ENCODE measurements at regions of chr19 and their contacts with region 1.

Region 1: DNA sequence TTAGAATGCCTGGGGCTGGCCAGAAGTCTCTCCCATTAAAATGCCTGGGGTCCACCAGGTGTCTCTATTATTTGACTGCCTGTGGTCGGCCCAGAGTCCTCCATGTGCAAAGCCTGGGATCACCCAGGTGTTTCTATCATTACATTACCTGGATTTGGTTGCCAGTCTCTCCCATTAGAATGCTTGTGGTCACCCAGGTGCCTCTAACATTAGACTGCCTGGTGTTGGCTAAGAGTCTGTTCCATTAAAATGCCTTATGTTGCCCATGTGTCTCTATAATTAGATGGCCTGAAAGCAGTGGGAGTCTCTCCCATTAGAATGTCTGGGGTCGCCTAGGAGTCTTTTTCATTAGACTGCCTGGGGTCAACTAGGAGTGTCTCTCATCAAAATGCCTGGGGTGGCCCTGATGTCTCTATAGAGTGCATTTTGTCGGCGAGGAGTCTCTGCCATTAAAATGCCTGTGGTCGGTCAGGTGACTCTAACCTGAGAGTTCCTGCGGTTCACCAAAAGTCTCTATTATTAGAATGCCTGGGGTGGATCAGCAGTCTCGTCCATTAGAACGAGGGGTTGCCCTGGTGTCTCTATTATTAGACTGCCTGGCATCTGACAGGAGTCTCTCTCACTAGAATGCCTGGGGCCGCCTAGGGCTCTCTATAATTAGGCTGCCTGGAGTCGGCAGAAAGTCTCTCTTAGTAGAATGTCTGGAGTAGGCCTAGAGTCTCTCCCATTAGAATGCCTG is 1540.5 kb downstream of the UQCRFS1 start:
- DNase-seq: peak in 1 of 2 donors; percentile 51
- ATAC-seq: peak; percentile 84 to 88 (median 86)
- H3K4me3 ChIP-seq: no peak overlapping the region
- H3K27ac ChIP-seq: peak overlapping the region; percentile 5
- H3K4me1 ChIP-seq: peaks cover 40% of the 10 kb centered on the region
- H3K27me3 ChIP-seq: no peaks in the 10 kb centered on the region
- CTCF ChIP-seq: no peak

Region 2: DNA sequence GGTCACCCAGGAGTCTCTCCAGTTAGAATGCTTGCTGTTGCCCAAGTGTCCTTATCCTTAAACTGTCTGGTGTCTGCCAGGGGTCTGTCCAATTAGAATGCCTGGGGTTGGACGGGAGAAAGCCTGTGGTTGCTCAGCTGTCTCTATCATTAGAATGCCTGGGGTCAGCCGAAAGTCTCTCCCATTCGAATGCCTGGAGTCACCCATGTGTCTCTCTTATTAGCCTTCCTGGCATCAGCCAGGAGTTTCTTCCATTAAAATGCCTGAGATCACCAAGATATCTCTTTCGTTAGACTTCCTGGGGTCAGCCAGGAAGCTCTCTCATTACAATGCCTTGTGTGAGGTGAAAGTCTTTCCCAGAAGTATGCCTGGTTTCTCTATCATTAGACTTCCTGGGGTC is 19.5 kb after region 1 on chr19:
- intact Hi-C with region 1: no loop called
- DNase-seq: no peak
- ATAC-seq: no peak
- H3K4me3 ChIP-seq: no peak overlapping the region
- H3K27ac ChIP-seq: no peak overlapping the region
- H3K4me1 ChIP-seq: peaks cover 10% of the 10 kb centered on the region
- H3K27me3 ChIP-seq: no peaks in the 10 kb centered on the region
- CTCF ChIP-seq: no peak

Region 3: DNA sequence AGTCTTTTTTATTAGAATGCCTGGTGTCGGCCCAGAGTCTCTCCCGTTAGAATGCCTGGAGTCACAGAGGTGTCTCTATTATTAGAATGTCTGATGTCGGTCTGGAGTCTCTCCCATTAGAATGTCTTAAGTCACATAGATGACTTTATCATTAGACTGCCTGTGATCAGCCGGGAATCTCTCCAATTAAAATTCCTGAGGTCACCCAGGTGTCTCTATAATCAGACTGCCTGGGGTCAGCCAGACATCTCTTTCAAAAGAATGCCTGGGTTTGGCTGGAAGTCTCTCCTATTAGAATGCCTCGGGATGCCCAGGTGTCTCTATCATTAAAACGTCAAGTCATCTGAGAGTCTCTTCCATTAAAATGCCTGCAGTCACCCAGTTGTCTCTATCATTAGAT is 46.6 kb after region 1 on chr19:
- intact Hi-C with region 1: loop called in 1 of 2 experiments (anchors 1 kb)
- DNase-seq: no peak
- ATAC-seq: no peak
- H3K4me3 ChIP-seq: no peak overlapping the region
- H3K27ac ChIP-seq: no peak overlapping the region
- H3K4me1 ChIP-seq: no peaks in the 10 kb centered on the region
- H3K27me3 ChIP-seq: no peaks in the 10 kb centered on the region
- CTCF ChIP-seq: no peak

Region 4: GRCh38 chr19:27746691-27747380 is 74.4 kb after region 1 on chr19:
- intact Hi-C with region 1: loop called in 1 of 2 experiments (anchors 10 kb)
- DNase-seq: peak; percentile 19 to 57
- ATAC-seq: peak; percentile 54 to 73 (median 66)
- H3K4me3 ChIP-seq: peak overlapping the region; percentile 25
- H3K27ac ChIP-seq: no peak overlapping the region
- H3K4me1 ChIP-seq: peaks cover 30% of the 10 kb centered on the region
- H3K27me3 ChIP-seq: no peaks in the 10 kb centered on the region
- CTCF ChIP-seq: peak; percentile 43

Region 5: DNA sequence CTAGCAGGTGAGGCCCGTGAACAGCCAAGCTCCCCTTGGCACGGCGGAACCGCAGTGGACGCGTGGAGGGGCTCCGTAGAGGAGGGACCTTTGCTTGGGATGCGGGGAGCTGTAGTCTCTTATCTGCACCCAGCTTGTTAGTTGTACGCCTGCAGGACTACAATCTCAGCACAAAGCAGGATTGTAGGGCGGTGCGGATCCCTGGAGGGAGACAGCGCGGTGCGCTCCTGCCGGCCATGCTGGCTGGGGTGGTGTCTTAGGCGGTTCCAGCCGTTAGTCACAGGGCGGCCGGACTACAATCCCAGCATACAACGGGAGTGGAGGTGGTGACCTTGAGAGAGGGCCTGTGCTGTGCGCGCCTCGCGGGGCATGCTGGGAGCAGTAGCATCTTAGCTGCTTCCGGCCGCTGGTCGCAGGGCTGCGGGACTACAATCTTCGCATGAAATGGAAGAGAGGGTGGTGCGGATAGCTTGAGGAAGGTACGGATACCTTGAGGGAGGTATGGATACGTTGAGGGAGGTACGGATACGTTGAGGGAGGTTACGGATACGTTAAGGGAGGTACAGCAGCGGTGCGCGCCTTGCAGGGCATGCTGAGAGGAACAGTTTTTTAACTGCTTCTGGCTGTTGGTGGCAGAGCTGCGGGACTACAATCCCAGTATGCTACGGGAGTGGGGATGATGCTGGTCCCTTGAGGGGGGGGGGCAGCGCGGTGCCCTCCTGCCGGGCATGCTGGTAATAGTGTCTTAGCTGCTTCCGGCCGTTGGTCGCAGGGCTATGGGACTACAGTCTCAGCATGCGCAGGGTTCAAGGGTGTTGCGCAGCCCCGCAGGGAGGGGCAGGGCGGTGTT is 121.4 kb after region 1 on chr19:
- intact Hi-C with region 1: loop called in 1 of 2 experiments (anchors 10 kb)
- DNase-seq: peak; percentile 94 to 96
- ATAC-seq: peak; percentile 96 to 98 (median 96)
- H3K4me3 ChIP-seq: peak overlapping the region; percentile 92
- H3K27ac ChIP-seq: peak overlapping the region; percentile 95
- H3K4me1 ChIP-seq: peaks cover 21% of the 10 kb centered on the region
- H3K27me3 ChIP-seq: no peaks in the 10 kb centered on the region
- CTCF ChIP-seq: no peak

Measured in psoas muscle (tissue), 8 donors.